CD4-positive, alpha-beta T cell (primary cell): ENCODE measurements at regions of chr16 and their contacts with region 1.

Region 1: DNA sequence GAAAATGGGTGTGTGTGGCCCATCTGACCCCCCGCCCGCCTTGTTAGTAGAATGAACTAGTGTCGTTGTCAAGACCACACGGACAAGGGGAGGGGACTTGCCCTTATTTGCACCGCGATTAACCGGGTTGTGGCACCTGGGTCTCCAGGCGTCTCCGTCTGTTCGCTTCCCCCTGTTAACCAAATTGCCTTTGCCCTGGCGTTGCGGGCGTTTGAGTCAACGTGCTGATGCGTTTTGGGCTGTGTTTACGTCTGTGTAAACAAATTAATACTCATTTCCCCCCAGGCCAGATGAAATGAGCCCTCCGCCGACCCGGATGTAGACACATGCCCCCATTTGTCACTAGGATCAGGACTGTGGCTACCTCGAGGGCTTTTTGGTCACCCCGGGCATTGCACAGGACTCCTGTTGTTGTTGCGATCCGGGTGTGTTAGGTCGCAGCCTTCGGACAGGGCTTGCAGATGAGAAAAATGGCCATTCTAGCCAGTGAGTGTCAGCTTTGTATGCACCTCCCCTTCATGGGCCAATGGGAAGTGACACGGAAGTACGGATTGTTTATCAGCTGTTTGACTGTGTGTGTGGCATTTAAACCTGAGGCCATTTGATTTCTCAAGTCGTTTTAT is 906 bp downstream of the RBL2 start:
- DNase-seq: peak; percentile 36 to 86 (median 55)
- ATAC-seq: peak; percentile 64
- H3K4me3 ChIP-seq: peak overlapping the region; percentile 86
- H3K4me3 Mint-ChIP-seq: peak overlapping the region; percentile 96
- H3K27ac ChIP-seq: peak overlapping the region; percentile 88 to 98
- H3K27ac Mint-ChIP-seq: peak overlapping the region; percentile 96
- H3K4me1 ChIP-seq: peaks cover 26% of the 10 kb centered on the region
- H3K4me1 Mint-ChIP-seq: peaks cover 53% of the 10 kb centered on the region
- H3K27me3 ChIP-seq: no peaks in the 10 kb centered on the region
- H3K27me3 Mint-ChIP-seq: no peaks in the 10 kb centered on the region
- CTCF ChIP-seq: no peak

Region 2: DNA sequence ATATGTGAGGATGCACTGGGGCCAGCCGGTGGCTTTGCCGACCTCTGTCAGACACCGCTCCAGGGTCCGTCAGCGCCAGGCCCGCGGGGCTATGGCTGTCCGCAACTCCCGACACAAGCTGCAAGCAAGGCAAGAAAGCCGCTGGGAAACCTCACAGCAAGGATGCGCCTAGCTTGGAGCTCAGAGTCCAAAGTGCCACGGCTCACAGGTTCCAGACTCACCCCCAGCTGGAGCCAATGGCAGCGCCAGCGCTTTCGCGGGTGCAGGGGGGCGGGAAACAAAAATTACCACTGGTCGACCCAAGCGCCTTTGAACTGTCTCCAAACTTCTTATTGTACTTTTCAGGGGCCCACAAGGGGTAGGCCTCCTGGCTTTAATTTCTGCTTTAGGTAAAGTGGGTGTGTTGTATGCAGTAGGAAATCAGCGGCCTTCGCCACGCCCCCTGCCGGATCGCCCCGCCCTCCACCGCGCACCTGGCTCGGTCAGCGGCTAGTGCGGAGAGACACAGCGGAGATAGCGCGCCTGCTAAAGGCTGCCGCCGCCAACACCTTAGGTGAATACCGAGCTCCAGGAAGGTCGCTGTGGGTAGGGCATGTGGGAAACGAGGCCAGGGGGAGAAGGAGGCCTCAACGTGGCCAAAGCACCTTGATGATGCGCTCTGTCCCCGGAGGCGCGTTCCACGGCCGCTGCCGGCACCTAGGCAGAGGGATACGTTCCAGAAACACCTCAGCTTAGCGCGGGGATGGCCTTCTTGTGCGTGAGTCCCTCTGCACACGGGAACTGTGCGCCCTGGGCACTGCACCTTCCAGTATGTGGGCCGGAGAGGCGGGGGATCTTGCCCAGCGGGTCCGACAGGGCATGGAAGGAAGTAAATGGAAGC is 61.9 kb before region 1 on chr16:
- CTCF ChIA-PET with region 1: no interaction called
- POLR2A ChIA-PET with region 1: interaction called, 7 read pairs
- intact Hi-C with region 1: loop called (anchors 2 kb)
- DNase-seq: peak; percentile 65 to 94 (median 82)
- ATAC-seq: peak; percentile 96
- H3K4me3 ChIP-seq: peak overlapping the region; percentile 72
- H3K4me3 Mint-ChIP-seq: no peak overlapping the region
- H3K27ac ChIP-seq: no peak overlapping the region
- H3K27ac Mint-ChIP-seq: peak overlapping the region; percentile 59
- H3K4me1 ChIP-seq: peaks cover 13% of the 10 kb centered on the region
- H3K4me1 Mint-ChIP-seq: peaks cover 35% of the 10 kb centered on the region
- H3K27me3 ChIP-seq: no peaks in the 10 kb centered on the region
- H3K27me3 Mint-ChIP-seq: no peaks in the 10 kb centered on the region
- CTCF ChIP-seq: no peak

Region 3: DNA sequence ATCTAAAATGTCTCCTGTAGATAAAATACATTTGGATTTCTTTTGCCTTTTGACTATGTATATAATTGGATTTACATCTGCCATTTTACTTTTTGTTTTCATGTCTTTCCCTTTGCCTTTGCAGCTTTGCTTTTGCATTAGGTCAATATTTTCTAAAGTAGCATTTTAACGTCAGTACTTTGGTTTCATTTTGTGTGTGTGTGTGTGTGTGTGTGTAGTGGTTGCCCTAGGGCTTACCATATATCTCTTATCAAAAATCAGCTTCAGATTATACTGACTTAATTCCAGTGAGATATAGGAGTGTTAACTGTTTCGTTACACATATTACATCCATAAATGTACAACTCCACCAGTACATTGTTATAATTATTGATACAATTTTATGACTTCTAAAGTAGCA is 41.7 kb after region 1 on chr16:
- CTCF ChIA-PET with region 1: no interaction called
- POLR2A ChIA-PET with region 1: interaction called, 17 read pairs
- intact Hi-C with region 1: no loop called
- DNase-seq: no peak
- ATAC-seq: no peak
- H3K4me3 ChIP-seq: no peak overlapping the region
- H3K4me3 Mint-ChIP-seq: peak overlapping the region; percentile 21
- H3K27ac ChIP-seq: no peak overlapping the region
- H3K27ac Mint-ChIP-seq: peak overlapping the region; percentile 63
- H3K4me1 ChIP-seq: peaks cover 11% of the 10 kb centered on the region
- H3K4me1 Mint-ChIP-seq: peaks cover 72% of the 10 kb centered on the region
- H3K27me3 ChIP-seq: no peaks in the 10 kb centered on the region
- H3K27me3 Mint-ChIP-seq: no peaks in the 10 kb centered on the region
- CTCF ChIP-seq: no peak

Region 4: GRCh38 chr16:53503270-53503923 is 68.2 kb after region 1 on chr16:
- CTCF ChIA-PET with region 1: no interaction called
- POLR2A ChIA-PET with region 1: interaction called, 166 read pairs
- intact Hi-C with region 1: loop called (anchors 1 to 2 kb)
- DNase-seq: peak; percentile 97 to 100 (median 100)
- ATAC-seq: peak; percentile 88
- H3K4me3 ChIP-seq: peak overlapping the region; percentile 76
- H3K4me3 Mint-ChIP-seq: peak overlapping the region; percentile 93
- H3K27ac ChIP-seq: peak overlapping the region; percentile 76 to 84
- H3K27ac Mint-ChIP-seq: peak overlapping the region; percentile 86
- H3K4me1 ChIP-seq: peaks cover 44% of the 10 kb centered on the region
- H3K4me1 Mint-ChIP-seq: peaks cover 65% of the 10 kb centered on the region
- H3K27me3 ChIP-seq: no peaks in the 10 kb centered on the region
- H3K27me3 Mint-ChIP-seq: no peaks in the 10 kb centered on the region
- CTCF ChIP-seq: no peak

Region 5: DNA sequence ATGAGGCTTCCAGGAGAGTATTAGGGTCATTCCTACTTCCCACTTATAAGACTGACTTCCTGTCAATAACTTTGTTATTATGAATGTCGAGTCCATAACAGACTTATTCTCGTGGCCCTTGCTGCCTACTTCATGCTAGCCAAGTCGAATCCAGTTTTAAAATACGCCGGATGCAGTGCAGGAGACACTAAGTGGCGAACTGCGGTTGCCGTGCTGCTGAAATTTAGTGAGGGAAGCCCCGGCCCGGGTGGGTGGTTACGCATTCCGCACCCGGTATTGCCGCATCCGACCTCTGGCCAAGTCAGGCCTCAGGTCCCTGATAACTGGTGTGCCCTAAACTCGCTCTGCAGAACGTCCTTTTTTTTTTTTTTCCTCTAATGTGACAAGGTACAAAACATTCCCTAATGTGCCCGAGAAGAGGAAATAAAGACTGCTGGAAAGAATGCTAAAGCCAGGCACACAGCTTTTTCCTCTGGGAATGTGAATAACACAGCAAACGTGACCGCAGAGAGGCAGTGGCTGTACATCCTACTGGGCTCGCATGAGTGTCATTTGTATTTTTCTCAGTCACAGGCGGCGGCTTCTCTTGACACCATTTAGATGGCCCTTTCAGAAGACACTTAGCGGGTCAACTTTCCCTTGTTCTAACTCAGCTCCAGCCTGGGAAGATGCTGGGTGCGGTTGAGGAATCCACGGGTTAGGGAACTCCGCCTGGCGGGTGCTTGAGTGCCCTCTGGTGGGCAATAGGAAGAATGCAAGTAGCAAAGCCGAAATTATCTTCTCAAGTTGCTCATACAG is 74.9 kb after region 1 on chr16:
- CTCF ChIA-PET with region 1: interaction called, 3 read pairs
- POLR2A ChIA-PET with region 1: interaction called, 166 read pairs
- intact Hi-C with region 1: loop called in 1 of 2 experiments (anchors 2 kb)
- DNase-seq: peak in 13 of 14 experiments; percentile 17 to 83 (median 36)
- ATAC-seq: peak; percentile 71
- H3K4me3 ChIP-seq: peak overlapping the region; percentile 33
- H3K4me3 Mint-ChIP-seq: peak overlapping the region; percentile 72
- H3K27ac ChIP-seq: no peak overlapping the region
- H3K27ac Mint-ChIP-seq: peak overlapping the region; percentile 11
- H3K4me1 ChIP-seq: peaks cover 28% of the 10 kb centered on the region
- H3K4me1 Mint-ChIP-seq: peaks cover 35% of the 10 kb centered on the region
- H3K27me3 ChIP-seq: no peaks in the 10 kb centered on the region
- H3K27me3 Mint-ChIP-seq: no peaks in the 10 kb centered on the region
- CTCF ChIP-seq: peak; percentile 97

Region 6: GRCh38 chr16:53703590-53704444 is 268.6 kb after region 1 on chr16 and contains the starts of genes FTO and RPGRIP1L:
- CTCF ChIA-PET with region 1: no interaction called
- POLR2A ChIA-PET with region 1: no interaction called
- intact Hi-C with region 1: loop called in 1 of 2 experiments (anchors 5 kb)
- DNase-seq: peak; percentile 90 to 99 (median 93)
- ATAC-seq: peak; percentile 89
- H3K4me3 ChIP-seq: peak within 1 kb of the TSS; percentile 87
- H3K4me3 Mint-ChIP-seq: peak within 1 kb of the TSS; percentile 97
- H3K27ac ChIP-seq: peak within 1 kb of the TSS; percentile 53 to 63
- H3K27ac Mint-ChIP-seq: peak within 1 kb of the TSS; percentile 86
- H3K4me1 ChIP-seq: peaks cover 14% of the 10 kb centered on the region
- H3K4me1 Mint-ChIP-seq: peaks cover 37% of the 10 kb centered on the region
- H3K27me3 ChIP-seq: no peaks in the 10 kb centered on the region
- H3K27me3 Mint-ChIP-seq: no peaks in the 10 kb centered on the region
- CTCF ChIP-seq: no peak
- total RNA-seq, gene FTO: 36.3 to 37.9 TPM
- total RNA-seq, gene RPGRIP1L: 2.4 to 2.5 TPM

Region 7: GRCh38 chr16:54929090-54930004 is 1494.2 kb after region 1 on chr16:
- CTCF ChIA-PET with region 1: no interaction called
- POLR2A ChIA-PET with region 1: no interaction called
- intact Hi-C with region 1: loop called in 1 of 2 experiments (anchors 10 kb)
- DNase-seq: peak; percentile 73 to 94 (median 90)
- ATAC-seq: peak; percentile 97
- H3K4me3 ChIP-seq: peak overlapping the region; percentile 49
- H3K4me3 Mint-ChIP-seq: peak overlapping the region; percentile 92
- H3K27ac ChIP-seq: no peak overlapping the region
- H3K27ac Mint-ChIP-seq: peak overlapping the region; percentile 61
- H3K4me1 ChIP-seq: peaks cover 47% of the 10 kb centered on the region
- H3K4me1 Mint-ChIP-seq: peaks cover 38% of the 10 kb centered on the region
- H3K27me3 ChIP-seq: peaks cover 45 to 77% of the 10 kb centered on the region in 2 experiments
- H3K27me3 Mint-ChIP-seq: peaks cover 74% of the 10 kb centered on the region
- CTCF ChIP-seq: no peak